CD8-positive, alpha-beta T cell (primary cell): ENCODE measurements at regions of chr11 and their contacts with region 1.

Region 1: DNA sequence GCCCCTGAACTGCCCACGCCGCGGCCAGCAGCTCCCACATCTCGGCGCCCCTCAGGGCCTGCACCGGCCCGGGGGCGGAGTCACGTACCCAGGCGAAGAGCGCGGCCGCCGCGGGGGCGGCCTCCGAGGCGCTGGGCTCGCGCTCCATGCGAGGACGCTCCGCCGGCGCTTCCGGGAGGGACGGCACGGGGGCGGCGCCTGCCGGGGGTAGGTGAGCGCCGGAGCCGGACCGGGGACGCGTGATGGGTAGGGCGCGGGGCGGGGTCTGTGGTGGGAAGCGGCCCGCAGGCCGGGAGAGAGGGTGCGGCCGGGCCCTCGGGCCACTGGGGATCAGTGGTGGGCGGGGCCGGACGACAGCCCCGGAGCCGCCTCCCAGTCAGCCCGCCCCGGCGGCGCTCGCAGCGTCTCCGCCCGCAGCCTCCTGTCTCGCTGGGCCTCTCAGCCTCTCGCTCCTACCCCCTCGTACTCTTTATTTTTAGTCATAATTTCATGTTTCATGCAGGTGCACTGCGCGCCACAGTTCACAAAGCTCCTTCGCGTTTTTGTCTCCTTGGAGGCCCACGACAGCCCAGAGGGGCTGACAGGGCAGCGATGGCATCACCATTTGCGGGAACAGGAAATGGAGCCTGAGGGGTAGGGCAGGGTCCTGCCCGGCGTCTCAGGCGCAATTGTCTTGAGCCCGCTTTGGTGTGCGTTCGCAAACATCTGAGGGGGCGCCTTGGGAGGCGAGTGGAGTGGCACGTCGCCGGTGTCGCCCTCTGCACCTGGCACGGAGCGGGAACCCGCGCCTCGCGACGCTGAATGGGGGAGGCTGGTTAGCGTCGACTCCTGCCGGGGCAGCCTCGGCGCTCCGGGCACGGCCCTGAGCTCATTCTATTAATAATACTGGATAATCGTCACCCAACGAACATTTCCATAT is at the start of gene SERGEF:
- DNase-seq: peak; percentile 80 to 97 (median 93)
- ATAC-seq: peak; percentile 82
- H3K4me3 ChIP-seq: peak within 1 kb of the TSS; percentile 94 to 99
- H3K4me3 Mint-ChIP-seq: peak within 1 kb of the TSS; percentile 99
- H3K27ac ChIP-seq: peak within 1 kb of the TSS; percentile 90
- H3K27ac Mint-ChIP-seq: peak within 1 kb of the TSS; percentile 97
- H3K4me1 ChIP-seq: peaks cover 16% of the 10 kb centered on the region
- H3K4me1 Mint-ChIP-seq: peaks cover 32% of the 10 kb centered on the region
- H3K27me3 ChIP-seq: no peaks in the 10 kb centered on the region
- H3K27me3 Mint-ChIP-seq: no peaks in the 10 kb centered on the region
- CTCF ChIP-seq: peak; percentile 8
- total RNA-seq, gene SERGEF: 36.6 to 44.7 TPM

Region 2: DNA sequence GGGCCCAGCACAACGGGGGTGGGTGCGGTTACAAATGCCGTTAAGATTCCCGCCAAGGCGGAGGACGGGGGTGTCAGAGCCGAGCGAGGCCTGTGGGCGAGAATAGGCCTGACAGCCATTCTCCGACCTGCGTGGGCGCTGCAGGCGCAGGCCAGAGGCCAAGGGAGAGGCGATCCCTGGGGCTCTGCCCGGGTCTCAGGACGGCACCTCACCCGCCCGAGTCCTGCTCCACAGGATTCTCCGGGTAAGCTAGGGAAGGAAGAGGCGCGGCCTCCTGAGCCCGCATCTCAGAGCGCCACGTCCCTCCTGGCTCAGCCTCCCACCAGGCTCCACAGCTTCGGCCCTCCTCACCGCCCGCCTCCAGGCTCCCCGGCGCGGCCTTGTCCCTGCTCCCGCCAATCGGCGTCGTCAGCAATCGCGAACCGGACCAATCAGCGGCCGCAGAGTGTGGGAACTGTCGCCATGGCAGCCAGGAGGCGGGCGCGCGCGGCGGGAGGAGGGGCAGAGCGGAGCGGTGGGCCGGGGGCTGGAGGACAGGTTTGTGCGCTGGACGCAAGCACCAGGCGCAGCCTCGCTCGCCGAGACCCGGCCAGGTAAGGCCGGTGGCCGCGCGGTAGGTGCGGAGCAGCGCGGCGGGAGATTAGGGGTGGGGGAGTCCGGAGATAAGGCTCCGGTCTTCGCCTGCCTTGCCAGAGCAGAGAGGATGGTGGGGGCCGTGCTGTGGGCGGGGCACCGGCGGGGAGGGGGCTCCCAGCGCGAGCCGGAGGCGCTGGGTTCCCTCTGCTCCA is 736.7 kb before region 1 on chr11 and contains the start of gene NUCB2:
- CTCF ChIA-PET with region 1: no interaction called
- POLR2A ChIA-PET with region 1: no interaction called
- intact Hi-C with region 1: loop called in 1 of 2 experiments (anchors 5 kb)
- DNase-seq: peak; percentile 89 to 98 (median 96)
- ATAC-seq: peak; percentile 90
- H3K4me3 ChIP-seq: peak within 1 kb of the TSS; percentile 77 to 83
- H3K4me3 Mint-ChIP-seq: peak within 1 kb of the TSS; percentile 84
- H3K27ac ChIP-seq: peak within 1 kb of the TSS; percentile 79 to 86
- H3K27ac Mint-ChIP-seq: peak within 1 kb of the TSS; percentile 91
- H3K4me1 ChIP-seq: peaks cover 37% of the 10 kb centered on the region
- H3K4me1 Mint-ChIP-seq: peaks cover 39% of the 10 kb centered on the region
- H3K27me3 ChIP-seq: no peaks in the 10 kb centered on the region
- H3K27me3 Mint-ChIP-seq: no peaks in the 10 kb centered on the region
- CTCF ChIP-seq: no peak
- total RNA-seq, gene NUCB2: 105 TPM

Region 3: DNA sequence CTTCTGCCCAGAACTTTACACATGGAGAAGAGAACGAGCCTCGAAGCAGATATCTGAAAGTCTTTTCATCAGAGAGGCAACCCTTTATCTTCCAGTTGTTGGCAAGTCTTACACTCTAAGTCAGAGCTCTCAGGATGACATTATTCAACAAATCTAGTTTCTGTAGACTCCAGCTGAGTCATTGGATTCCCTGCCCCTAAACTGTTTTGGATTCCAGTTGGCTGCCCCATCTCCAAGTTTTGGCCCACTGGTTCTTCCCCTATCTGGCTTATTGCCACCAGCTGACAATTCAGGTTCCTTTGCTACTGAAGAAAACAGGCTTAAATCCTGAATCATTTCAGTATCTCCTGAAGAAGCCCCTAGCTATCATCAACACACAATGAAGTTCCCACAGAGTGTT is 78.6 kb after region 1 on chr11:
- CTCF ChIA-PET with region 1: no interaction called
- POLR2A ChIA-PET with region 1: interaction called, 3 read pairs
- intact Hi-C with region 1: loop called in 1 of 2 experiments (anchors 5 kb)
- DNase-seq: no peak
- ATAC-seq: no peak
- H3K4me3 ChIP-seq: no peak overlapping the region
- H3K4me3 Mint-ChIP-seq: no peak overlapping the region
- H3K27ac ChIP-seq: no peak overlapping the region
- H3K27ac Mint-ChIP-seq: no peak overlapping the region
- H3K4me1 ChIP-seq: no peaks in the 10 kb centered on the region
- H3K4me1 Mint-ChIP-seq: peaks cover 3% of the 10 kb centered on the region
- H3K27me3 ChIP-seq: no peaks in the 10 kb centered on the region
- H3K27me3 Mint-ChIP-seq: no peaks in the 10 kb centered on the region
- CTCF ChIP-seq: no peak

Region 4: GRCh38 chr11:18395735-18396504 is 382.8 kb after region 1 on chr11:
- CTCF ChIA-PET with region 1: no interaction called
- POLR2A ChIA-PET with region 1: interaction called, 5 read pairs
- intact Hi-C with region 1: loop called (anchors 5 kb)
- DNase-seq: peak; percentile 89 to 98 (median 92)
- ATAC-seq: peak; percentile 54
- H3K4me3 ChIP-seq: peak overlapping the region; percentile 86 to 98
- H3K4me3 Mint-ChIP-seq: peak overlapping the region; percentile 97
- H3K27ac ChIP-seq: peak overlapping the region; percentile 90
- H3K27ac Mint-ChIP-seq: peak overlapping the region; percentile 96
- H3K4me1 ChIP-seq: peaks cover 22% of the 10 kb centered on the region
- H3K4me1 Mint-ChIP-seq: peaks cover 35% of the 10 kb centered on the region
- H3K27me3 ChIP-seq: no peaks in the 10 kb centered on the region
- H3K27me3 Mint-ChIP-seq: no peaks in the 10 kb centered on the region
- CTCF ChIP-seq: no peak

Region 5: DNA sequence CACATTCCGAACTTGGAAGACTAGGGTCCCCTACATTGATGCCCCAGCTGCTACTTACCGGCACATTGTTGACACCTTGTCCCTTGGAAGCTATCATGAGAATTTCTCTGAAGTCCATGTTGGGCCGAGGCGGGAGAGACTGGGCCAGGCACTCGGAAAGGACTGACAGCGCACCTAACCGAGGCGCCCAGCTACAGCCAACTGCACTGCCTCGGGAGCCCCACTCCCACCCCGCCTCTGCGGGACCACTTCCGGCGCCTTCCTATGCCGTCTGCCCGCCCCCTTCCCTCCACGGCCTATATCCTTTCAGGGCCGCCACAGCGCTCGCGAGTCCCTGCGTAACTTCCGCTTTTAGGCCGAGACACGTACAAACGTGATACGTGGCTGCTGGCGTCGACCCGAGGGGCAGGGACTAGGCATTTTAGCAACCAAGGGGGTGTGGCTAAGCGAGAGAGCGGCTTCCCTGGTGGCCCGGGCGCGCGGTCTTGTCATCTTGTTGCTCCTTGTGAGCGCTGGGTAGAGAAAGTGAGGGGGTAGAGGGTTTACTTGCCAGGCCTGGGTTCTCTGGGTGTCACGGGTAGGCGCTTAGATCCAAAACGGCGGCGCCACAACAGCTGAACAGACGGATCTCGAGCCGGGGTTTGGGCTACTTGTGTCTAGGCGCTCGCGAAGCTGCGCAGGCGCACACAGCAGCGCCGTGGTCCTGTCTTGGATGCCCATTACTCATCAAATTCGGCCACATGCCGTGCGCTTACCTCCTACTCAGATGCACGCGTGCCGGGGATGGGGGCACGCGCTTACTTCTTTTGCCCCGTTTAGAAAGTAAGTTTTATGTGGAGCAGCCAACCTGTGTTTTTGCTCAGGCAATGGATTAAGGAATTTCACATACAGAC is 621.3 kb after region 1 on chr11 and contains the start of gene SPTY2D1:
- CTCF ChIA-PET with region 1: no interaction called
- POLR2A ChIA-PET with region 1: no interaction called
- intact Hi-C with region 1: loop called in 1 of 2 experiments (anchors 2 kb)
- DNase-seq: peak; percentile 94 to 100 (median 97)
- ATAC-seq: peak; percentile 92
- H3K4me3 ChIP-seq: peak within 1 kb of the TSS; percentile 85 to 87
- H3K4me3 Mint-ChIP-seq: peak within 1 kb of the TSS; percentile 88
- H3K27ac ChIP-seq: peak within 1 kb of the TSS; percentile 92 to 100
- H3K27ac Mint-ChIP-seq: peak within 1 kb of the TSS; percentile 97
- H3K4me1 ChIP-seq: peaks cover 15% of the 10 kb centered on the region
- H3K4me1 Mint-ChIP-seq: peaks cover 34% of the 10 kb centered on the region
- H3K27me3 ChIP-seq: no peaks in the 10 kb centered on the region
- H3K27me3 Mint-ChIP-seq: no peaks in the 10 kb centered on the region
- CTCF ChIP-seq: no peak
- total RNA-seq, gene SPTY2D1: 74.9 to 76.9 TPM

Region 6: DNA sequence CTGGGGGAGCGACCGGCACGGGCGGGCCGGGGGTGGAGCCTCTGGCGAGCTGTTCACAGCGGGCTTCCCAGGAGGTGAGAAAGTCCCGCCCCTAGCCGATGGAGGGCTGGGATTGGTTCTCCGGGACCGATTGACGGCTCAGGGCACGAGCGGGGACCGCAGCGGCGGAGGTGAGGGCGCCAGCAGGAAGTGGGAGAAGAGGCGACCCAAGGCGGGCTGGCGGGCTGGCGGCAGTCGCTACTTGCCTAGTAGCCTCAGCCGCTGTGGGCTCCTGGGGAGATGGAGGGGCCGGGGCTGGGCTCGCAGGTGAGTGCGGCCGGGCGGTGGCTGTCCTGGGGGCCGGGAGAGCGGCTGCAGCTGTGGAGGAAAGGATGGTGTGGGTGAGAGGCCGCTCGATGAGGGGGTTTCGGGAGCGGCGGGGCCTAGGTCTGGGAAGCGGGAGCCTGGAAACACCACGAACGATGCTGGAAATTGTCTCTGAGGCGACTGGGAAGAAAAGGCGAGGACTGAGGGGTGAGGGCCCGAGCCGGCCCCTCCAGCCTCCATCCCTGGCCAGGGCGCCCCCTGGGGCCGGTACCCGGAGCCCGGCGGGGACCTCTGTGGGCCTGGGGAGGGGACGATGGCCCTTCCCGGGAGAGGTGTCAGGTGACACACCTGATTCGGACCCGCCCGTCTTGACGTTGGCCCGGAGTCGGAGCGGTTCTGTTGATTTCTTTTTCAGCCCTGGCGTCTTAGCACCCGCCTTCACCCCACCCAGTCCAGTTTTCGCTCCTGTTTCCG is 1104.0 kb after region 1 on chr11 and contains the start of gene ZDHHC13:
- CTCF ChIA-PET with region 1: no interaction called
- POLR2A ChIA-PET with region 1: no interaction called
- intact Hi-C with region 1: loop called (anchors 10 kb)
- DNase-seq: peak; percentile 85 to 96 (median 93)
- ATAC-seq: peak; percentile 98
- H3K4me3 ChIP-seq: peak within 1 kb of the TSS; percentile 73 to 84
- H3K4me3 Mint-ChIP-seq: peak within 1 kb of the TSS; percentile 93
- H3K27ac ChIP-seq: peak within 1 kb of the TSS; percentile 48 to 62
- H3K27ac Mint-ChIP-seq: peak within 1 kb of the TSS; percentile 87
- H3K4me1 ChIP-seq: peaks cover 26% of the 10 kb centered on the region
- H3K4me1 Mint-ChIP-seq: peaks cover 50% of the 10 kb centered on the region
- H3K27me3 ChIP-seq: no peaks in the 10 kb centered on the region
- H3K27me3 Mint-ChIP-seq: no peaks in the 10 kb centered on the region
- CTCF ChIP-seq: no peak
- total RNA-seq, gene ZDHHC13: 3.1 to 3.5 TPM